PC-9 (cell line): ENCODE measurements at regions of chr6 and their contacts with region 1.

Region 1: DNA sequence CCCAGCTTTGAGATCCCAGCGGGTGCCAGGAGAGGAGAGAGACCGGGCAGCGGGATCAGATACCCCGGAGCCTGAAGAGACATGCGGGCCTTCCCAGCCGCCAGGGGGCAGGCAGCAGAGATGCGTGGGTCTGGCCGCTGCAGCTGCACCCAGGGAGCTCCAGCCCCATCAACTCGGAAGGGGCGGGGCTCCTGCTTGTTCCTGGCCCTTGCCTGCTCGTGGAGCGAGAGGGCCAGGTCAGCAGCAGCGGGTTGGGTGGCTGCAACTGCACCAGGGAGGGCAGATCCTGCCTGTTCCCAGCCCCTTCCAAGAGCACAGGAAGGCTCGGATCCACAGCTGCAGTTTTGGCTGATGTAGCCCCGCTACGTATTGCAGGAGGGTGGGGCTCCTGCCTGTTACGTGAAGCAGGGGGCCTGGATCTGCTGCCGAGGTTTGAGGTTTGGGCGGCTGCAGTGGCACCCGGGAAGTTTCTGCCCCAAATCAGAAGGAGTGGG is 532.8 kb downstream of the RFPL4B start:
- DNase-seq: peak; percentile 53 to 61
- H3K4me3 ChIP-seq: peak overlapping the region; percentile 47
- H3K27ac ChIP-seq: peak overlapping the region; percentile 26
- H3K4me1 ChIP-seq: no peaks in the 10 kb centered on the region
- H3K27me3 ChIP-seq: no peaks in the 10 kb centered on the region
- CTCF ChIP-seq: peak; percentile 54

Region 2: DNA sequence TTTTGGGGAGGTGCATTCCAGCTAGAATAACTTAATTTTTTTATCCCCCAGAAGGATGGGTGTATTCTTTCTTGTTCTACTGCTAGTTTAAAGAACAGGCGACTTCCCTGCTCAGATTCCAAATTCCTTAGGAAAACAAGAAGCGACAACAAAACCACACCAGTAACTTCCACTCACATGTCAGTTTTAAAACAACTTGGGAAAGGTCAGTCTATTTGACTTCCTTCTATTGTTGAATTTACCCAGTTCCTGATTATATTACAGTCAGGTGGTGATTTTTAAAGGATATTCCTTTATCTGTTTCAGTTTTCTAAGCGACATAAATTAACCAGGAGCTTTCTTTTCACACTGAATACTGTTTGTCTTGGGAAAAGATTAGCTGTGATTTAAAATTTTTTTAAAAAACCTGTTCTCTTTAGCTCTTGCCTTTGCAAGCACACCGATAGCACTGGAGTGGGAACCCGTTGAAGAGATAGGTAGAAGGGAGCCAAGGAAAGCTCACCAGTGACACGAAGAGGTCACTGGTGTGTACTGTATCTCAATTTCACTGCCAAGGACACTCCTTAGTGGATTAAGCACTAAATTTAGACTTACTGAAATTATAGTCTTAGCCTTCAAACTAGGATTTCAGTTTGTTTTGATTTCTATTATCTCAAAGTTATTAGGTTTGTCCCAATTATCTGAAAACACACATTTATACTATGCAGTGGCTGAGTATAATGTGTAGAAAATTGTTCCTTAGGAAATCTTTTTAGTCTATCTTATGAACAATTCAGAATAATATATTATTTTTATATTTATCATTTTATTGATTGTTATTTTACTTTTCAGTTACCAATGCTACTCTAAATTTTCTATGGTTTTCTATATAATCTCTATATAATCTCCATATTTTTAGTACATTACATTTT is 999.5 kb after region 1 on chr6:
- CTCF ChIA-PET with region 1: no interaction called
- POLR2A ChIA-PET with region 1: no interaction called
- intact Hi-C with region 1: loop called (anchors 5 kb)
- DNase-seq: peak; percentile 54 to 77
- H3K4me3 ChIP-seq: no peak overlapping the region
- H3K27ac ChIP-seq: peak overlapping the region; percentile 49
- H3K4me1 ChIP-seq: peaks cover 10% of the 10 kb centered on the region
- H3K27me3 ChIP-seq: no peaks in the 10 kb centered on the region
- CTCF ChIP-seq: peak; percentile 85